Cardiac septum (tissue), 1 donor: ENCODE measurements at regions of chr1 and their contacts with region 1.

Region 1: DNA sequence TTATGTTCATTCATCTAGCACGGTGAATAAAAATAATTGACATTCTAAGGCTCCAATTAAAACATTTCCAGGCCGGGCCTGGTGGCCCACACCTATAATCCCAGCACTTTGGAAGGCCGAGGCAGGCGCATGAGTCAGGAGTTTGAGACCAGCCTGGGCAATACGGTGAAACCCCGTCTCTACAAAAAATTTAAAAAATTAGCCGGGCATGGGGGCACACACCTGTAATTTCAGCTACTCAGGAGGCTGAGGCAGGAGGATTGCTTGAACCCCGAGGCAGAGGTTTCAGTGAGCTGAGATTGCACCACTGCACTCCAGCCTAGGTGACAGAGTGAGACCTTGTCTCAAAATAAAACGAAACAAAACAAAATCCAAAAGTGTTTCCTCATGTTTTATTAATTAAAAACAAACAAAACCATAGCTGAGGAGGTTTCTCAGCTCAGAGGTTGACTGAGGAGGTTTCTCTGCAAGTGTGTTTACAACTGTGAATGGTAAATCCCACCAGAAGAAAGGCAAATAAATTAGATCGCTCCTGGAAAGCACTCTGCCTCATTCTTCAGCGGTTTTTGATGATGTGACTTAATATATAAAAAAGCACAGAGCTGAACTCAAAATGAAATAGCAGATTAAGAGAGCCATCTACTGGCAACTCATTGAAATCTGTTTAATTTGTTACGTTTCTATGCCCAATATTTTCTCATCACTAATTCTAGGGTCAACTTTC is 37.7 kb upstream of the ATG4C start:
- DNase-seq: no peak

Region 2: DNA sequence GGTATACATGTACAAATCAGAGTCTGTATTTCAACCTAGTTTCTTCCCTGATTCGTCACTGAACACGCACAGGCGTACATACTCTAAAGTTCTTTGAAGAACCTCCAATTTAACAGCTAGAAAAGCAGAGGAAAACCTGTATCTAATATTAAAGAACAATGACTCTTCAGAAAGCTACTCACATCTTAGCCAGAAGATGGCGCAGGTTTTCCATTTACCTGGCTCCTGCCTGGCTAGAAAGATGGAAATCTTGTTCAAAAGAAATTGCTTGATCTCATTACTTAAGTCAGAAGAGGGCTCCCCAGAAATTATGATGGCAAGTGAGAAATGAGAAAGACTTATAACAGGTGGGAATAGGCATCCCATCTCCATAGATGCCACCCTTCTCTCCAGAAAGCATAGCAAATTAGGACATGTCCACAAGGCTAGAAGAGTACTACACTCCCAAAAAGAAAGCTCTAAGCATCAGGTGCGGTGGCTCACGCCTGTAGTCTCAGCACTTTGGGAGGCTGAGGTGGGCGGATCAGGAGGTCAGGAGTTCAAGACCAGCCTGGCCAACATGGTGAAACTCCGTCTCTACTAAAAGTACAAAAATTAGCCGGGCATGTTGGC is 570.6 kb before region 1 on chr1:
- intact Hi-C with region 1: loop called (anchors 10 kb)
- DNase-seq: no peak

Region 3: GRCh38 chr1:62508187-62508758 is 238.0 kb before region 1 on chr1:
- intact Hi-C with region 1: loop called (anchors 2 kb)
- DNase-seq: no peak

Region 4: GRCh38 chr1:62530516-62531154 is 215.6 kb before region 1 on chr1:
- intact Hi-C with region 1: loop called (anchors 1 kb)
- DNase-seq: no peak

Region 5: GRCh38 chr1:62687903-62688686 is 58.2 kb before region 1 on chr1 and contains the start of gene DOCK7:
- intact Hi-C with region 1: loop called (anchors 2 kb)
- DNase-seq: peak; percentile 87
- total RNA-seq, gene DOCK7: 12.8 TPM